PC-3 (cell line): ENCODE measurements at regions of chr17 and their contacts with region 1.

Region 1: GRCh38 chr17:77414811-77415400 is 274.1 kb downstream of the SEC14L1 start:
- DNase-seq: no peak
- ATAC-seq: no peak
- H3K4me3 ChIP-seq: no peak overlapping the region
- H3K27ac ChIP-seq: no peak overlapping the region
- H3K4me1 ChIP-seq: peaks cover 26% of the 10 kb centered on the region
- H3K27me3 ChIP-seq: no peaks in the 10 kb centered on the region
- CTCF ChIP-seq: no peak

Region 2: GRCh38 chr17:77186141-77186604 is 228.7 kb before region 1 on chr17:
- CTCF ChIA-PET with region 1: no interaction called
- POLR2A ChIA-PET with region 1: no interaction called
- intact Hi-C with region 1: no loop called
- DNase-seq: no peak
- ATAC-seq: no peak
- H3K4me3 ChIP-seq: no peak overlapping the region
- H3K27ac ChIP-seq: no peak overlapping the region
- H3K4me1 ChIP-seq: peaks cover 11% of the 10 kb centered on the region
- H3K27me3 ChIP-seq: no peaks in the 10 kb centered on the region
- CTCF ChIP-seq: no peak

Region 3: GRCh38 chr17:77353684-77354419 is 61.1 kb before region 1 on chr17:
- CTCF ChIA-PET with region 1: interaction called, 10 read pairs
- POLR2A ChIA-PET with region 1: no interaction called
- intact Hi-C with region 1: no loop called
- DNase-seq: no peak
- ATAC-seq: no peak
- H3K4me3 ChIP-seq: no peak overlapping the region
- H3K27ac ChIP-seq: no peak overlapping the region
- H3K4me1 ChIP-seq: no peaks in the 10 kb centered on the region
- H3K27me3 ChIP-seq: no peaks in the 10 kb centered on the region
- CTCF ChIP-seq: no peak